Naive thymus-derived CD8-positive, alpha-beta T cell (primary cell): ENCODE measurements at regions of chr6 and their contacts with region 1.

Region 1: GRCh38 chr6:42745707-42746462 is at the start of gene TBCC:
- DNase-seq: peak; percentile 81 to 98 (median 94)
- ATAC-seq: peak; percentile 70 to 75
- H3K4me3 Mint-ChIP-seq: peak within 1 kb of the TSS; percentile 90 to 100 (median 100)
- H3K27ac Mint-ChIP-seq: peak within 1 kb of the TSS; percentile 99 to 100 (median 100)
- H3K4me1 Mint-ChIP-seq: peaks cover 14 to 45% (median 36%) of the 10 kb centered on the region in 4 donors
- H3K27me3 Mint-ChIP-seq: no peaks in the 10 kb centered on the region
- polyA plus RNA-seq, gene TBCC: 112 to 126 (median 125) TPM

Region 2: GRCh38 chr6:42200035-42200434 is 545.9 kb before region 1 on chr6:
- POLR2A ChIA-PET with region 1: no interaction called
- DNase-seq: no peak
- ATAC-seq: no peak
- H3K4me3 Mint-ChIP-seq: no peak overlapping the region
- H3K27ac Mint-ChIP-seq: peak overlapping the region in 2 of 10 donors; percentile 85 to 92
- H3K4me1 Mint-ChIP-seq: peaks cover 0 to 4% (median 0%) of the 10 kb centered on the region in 4 donors
- H3K27me3 Mint-ChIP-seq: no peaks in the 10 kb centered on the region

Region 3: GRCh38 chr6:42652024-42652746 is 93.7 kb before region 1 on chr6:
- POLR2A ChIA-PET with region 1: no interaction called
- DNase-seq: no peak
- ATAC-seq: no peak
- H3K4me3 Mint-ChIP-seq: no peak overlapping the region
- H3K27ac Mint-ChIP-seq: peak overlapping the region in 1 of 10 donors; percentile 43
- H3K4me1 Mint-ChIP-seq: peaks cover 0 to 3% (median 0%) of the 10 kb centered on the region in 4 donors
- H3K27me3 Mint-ChIP-seq: no peaks in the 10 kb centered on the region

Region 4: DNA sequence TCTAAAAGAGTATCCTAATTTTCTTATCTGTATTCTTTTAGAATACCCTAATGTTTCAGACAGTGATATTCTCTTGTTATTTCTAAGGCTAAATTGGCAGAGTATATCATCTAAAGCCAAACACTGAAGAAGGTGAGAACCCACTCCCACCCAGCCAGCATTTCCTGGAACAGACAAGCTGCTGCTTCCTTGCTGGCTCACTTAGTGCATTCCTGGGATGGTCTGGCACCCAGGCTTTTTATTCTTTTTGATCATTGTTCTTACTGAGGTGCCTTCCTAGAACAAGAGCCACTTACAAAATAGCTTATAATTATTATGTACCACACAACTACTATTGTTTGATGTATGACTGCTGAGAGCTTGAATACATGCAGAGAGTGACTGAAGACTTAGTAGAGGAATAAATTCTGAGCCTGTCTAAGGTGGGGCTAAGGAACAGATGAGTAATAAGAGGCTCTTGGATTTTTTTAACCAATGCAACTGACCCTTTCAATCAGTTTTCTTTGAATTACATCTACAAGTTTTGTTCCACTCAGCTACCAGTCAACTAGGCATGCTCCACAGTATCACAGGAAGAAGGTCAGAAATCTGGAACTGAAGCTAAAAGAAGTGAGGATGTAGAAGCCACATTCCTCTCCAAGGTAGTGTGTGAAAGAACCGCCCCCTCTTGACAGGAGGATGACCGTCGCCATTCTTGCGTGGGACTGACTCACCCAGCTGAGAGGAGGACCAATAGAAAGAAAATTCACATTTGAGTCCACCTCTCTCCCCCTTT is 53.6 kb before region 1 on chr6:
- POLR2A ChIA-PET with region 1: interaction called, 39 read pairs
- DNase-seq: no peak
- ATAC-seq: peak in 1 of 2 donors; percentile 11
- H3K4me3 Mint-ChIP-seq: peak overlapping the region in 3 of 10 donors; percentile 4 to 61 (median 44)
- H3K27ac Mint-ChIP-seq: peak overlapping the region; percentile 48 to 96 (median 90)
- H3K4me1 Mint-ChIP-seq: peaks cover 26 to 55% (median 47%) of the 10 kb centered on the region in 4 donors
- H3K27me3 Mint-ChIP-seq: no peaks in the 10 kb centered on the region

Region 5: GRCh38 chr6:42777126-42777822 is 31.4 kb after region 1 on chr6:
- POLR2A ChIA-PET with region 1: interaction called, 852 read pairs
- DNase-seq: no peak
- ATAC-seq: no peak
- H3K4me3 Mint-ChIP-seq: peak overlapping the region in 3 of 10 donors; percentile 14 to 54 (median 14)
- H3K27ac Mint-ChIP-seq: peak overlapping the region in 9 of 10 donors; percentile 68 to 100 (median 84)
- H3K4me1 Mint-ChIP-seq: peaks cover 30 to 76% (median 65%) of the 10 kb centered on the region in 4 donors
- H3K27me3 Mint-ChIP-seq: no peaks in the 10 kb centered on the region

Region 6: GRCh38 chr6:42864602-42865001 is 118.7 kb after region 1 on chr6:
- POLR2A ChIA-PET with region 1: interaction called, 11 read pairs
- DNase-seq: no peak
- ATAC-seq: no peak
- H3K4me3 Mint-ChIP-seq: no peak overlapping the region
- H3K27ac Mint-ChIP-seq: peak overlapping the region in 7 of 10 donors; percentile 11 to 87 (median 38)
- H3K4me1 Mint-ChIP-seq: no peaks in the 10 kb centered on the region
- H3K27me3 Mint-ChIP-seq: no peaks in the 10 kb centered on the region

Region 7: DNA sequence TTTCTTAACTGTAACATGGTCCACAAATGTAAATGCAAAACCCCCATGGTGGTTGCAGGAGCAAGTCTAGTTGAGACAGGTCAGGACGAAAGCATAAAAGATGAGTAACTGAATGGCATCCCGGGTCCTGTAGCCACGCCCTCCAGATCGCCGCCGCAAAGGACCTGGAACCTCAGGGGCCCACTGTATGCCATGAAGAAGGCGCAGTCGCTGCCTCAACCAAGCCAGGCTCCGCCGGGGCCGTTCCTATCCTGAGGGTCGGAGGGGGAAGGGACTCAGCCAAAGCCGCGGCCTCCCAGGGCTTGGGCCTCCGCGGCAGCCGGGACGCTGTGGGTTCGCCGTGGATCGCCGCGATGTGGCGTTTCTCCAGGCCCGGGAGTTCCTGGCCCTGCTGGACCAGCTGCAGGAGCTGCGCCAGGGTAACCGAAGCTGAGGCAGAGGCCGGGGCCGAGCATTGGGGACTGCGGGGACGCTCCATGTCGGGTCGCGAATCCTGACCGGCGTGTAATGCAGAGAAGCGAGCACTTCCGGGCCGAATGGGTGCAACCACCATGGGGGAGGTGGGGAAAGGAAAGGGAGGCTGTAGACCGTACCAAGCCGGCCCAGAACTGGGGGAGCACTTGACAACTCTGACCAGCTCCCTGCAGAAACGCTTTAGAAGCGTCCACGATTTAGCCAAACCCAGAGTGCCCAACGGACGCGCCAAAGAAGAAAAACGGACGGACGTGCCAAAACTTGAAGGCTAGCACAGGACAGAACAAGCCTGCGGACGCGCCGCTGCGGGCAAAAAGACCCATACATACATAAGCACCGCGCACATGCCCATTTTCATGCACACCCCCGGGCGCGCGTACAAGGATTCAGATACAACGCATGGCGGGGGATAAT is 144.7 kb after region 1 on chr6:
- POLR2A ChIA-PET with region 1: interaction called, 19 read pairs
- DNase-seq: peak; percentile 69 to 94 (median 85)
- ATAC-seq: peak; percentile 87 to 94
- H3K4me3 Mint-ChIP-seq: peak overlapping the region; percentile 92 to 99 (median 98)
- H3K27ac Mint-ChIP-seq: peak overlapping the region; percentile 92 to 98 (median 96)
- H3K4me1 Mint-ChIP-seq: peaks cover 7 to 37% (median 19%) of the 10 kb centered on the region in 4 donors
- H3K27me3 Mint-ChIP-seq: no peaks in the 10 kb centered on the region